ENCODE measurements at regions of chr19 and their contacts with region 1.

Region 1: DNA sequence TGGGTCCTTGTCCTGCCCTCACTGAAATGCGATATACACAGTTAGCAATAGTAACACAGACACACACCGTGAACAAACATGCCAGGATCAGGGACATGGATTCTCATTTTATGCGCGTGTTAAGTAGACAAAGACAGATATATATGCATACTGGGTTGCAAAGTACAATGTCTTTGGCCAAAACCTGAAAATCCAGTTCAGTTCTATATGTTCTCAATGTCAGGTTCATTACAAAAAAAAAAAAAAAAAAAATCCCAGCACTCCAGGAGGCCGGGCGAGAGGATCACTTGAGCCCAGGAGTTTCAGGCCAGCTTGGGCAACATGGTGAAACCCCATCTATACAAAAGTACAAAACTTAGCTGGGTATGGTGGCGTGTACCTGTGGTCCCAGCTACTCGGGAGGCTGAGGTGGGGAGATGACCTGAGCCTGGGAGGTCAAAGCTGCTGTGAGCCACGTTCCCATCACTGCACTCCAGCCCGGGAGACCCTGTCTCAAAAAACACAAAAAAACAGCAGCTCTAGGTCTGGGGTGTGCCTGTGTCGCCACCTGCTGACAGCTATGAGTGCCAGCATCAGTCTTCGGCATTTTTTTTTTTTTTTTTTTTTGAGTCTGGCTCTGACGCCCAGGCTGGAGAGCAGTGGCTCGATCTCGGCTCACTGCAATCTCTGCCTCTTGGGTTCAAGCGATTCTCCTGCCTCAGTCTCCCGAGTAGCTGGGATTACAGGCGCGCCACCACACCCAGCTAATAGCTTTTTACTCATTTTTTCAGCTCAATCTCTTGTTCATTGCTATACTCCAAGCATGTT is 10.3 kb downstream of the AP2S1 start:
- DNase-seq: peak in 2 of 3 donors; percentile 55 to 66
- ATAC-seq: peak; percentile 78
- H3K4me3 ChIP-seq: no peak overlapping the region
- H3K4me1 ChIP-seq: peaks cover 13% of the 10 kb centered on the region
- CTCF ChIP-seq: peak; percentile 69

Region 2: DNA sequence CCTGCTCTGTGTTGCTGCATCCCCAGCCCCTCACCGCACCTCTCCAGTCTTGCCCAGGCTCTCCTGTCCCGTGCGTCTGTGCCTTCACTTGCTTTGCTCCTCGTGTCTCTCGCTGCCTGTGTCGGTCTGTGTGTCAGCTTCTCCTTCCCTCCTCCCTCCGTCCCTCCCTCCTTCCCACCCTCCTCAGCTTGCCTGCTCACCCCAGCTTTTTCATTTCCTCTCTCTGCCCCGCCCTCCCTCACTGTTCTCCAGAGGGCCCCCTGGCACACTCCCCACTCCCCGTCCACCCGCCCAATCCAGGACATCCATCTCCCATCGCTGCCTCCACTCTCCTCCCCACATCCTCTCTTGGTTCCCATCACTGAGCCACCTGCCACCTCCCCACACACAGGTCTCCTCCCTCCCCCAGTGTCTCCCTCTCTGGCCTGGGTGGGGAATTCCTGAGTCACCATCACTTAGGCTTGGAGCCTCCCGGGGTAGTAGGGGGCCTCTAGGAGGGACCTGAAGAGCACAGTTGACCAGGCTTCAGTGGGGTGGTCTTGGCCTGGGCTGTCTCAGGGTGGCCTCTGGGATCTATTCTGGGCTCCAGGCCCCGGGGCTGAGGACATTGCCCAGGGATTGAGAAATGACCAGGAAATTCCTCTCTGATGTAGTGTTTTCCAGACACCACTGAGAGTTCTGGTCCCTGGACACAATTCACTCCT is 215.2 kb before region 1 on chr19 and contains the start of gene PTGIR:
- intact Hi-C with region 1: no loop called
- DNase-seq: peak in 2 of 3 donors; percentile 46 to 68
- ATAC-seq: peak; percentile 47
- H3K4me3 ChIP-seq: no peak within 1 kb of the TSS
- H3K4me1 ChIP-seq: no peaks in the 10 kb centered on the region
- CTCF ChIP-seq: no peak
- total RNA-seq, gene PTGIR: 0.49 to 2.4 (median 2.1) TPM

Region 3: GRCh38 chr19:46756544-46756888 is 83.8 kb before region 1 on chr19:
- intact Hi-C with region 1: loop called (anchors 2 kb)
- DNase-seq: peak in 2 of 3 donors; percentile 41 to 60
- ATAC-seq: no peak
- H3K4me3 ChIP-seq: no peak overlapping the region
- H3K4me1 ChIP-seq: peaks cover 3% of the 10 kb centered on the region
- CTCF ChIP-seq: no peak

Region 4: DNA sequence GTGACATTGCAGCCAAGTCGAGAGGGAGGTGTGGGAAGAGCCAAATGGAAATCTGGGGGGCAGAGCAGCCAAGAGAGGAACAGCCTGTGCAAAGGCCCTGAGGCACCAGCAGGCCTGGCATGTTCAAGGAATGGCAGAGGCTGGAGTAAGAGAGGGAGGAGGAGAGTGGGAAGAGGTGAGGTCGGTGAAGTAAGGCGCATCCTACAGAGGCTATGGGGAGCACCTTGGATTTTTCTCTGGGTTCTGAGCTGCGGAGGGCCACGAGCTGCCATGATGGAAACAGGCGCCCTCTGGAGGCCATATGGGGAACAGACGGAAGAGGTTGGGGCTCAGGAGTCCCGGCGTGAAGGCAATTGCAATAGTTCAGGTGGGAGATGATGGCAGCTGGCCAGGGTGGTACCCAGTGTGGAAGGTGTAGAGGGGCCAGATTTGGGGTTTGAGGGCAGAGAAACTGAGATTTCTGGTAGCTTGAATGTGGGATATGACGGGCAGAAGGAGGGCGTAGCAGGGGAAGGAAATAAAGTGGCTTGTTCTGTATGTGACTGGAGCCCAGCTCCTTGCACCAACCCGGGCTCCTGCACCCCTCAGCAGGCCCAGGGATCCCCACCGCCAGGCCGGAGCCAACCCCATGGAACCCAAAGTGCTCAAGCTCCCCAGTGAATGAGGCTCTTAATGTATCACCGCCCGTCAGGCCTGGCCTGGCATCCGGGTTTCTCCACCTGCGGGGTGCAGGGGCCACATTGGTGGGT is 73.6 kb before region 1 on chr19:
- intact Hi-C with region 1: loop called in 1 of 2 experiments (anchors 5 kb)
- DNase-seq: peak; percentile 58 to 64 (median 62)
- ATAC-seq: no peak
- H3K4me3 ChIP-seq: no peak overlapping the region
- H3K4me1 ChIP-seq: peaks cover 32% of the 10 kb centered on the region
- CTCF ChIP-seq: peak; percentile 58

Region 5: GRCh38 chr19:46776927-46777911 is 63.1 kb before region 1 on chr19:
- intact Hi-C with region 1: no loop called
- DNase-seq: no peak
- ATAC-seq: peak; percentile 53
- H3K4me3 ChIP-seq: no peak overlapping the region
- H3K4me1 ChIP-seq: peaks cover 2% of the 10 kb centered on the region
- CTCF ChIP-seq: no peak

Region 6: DNA sequence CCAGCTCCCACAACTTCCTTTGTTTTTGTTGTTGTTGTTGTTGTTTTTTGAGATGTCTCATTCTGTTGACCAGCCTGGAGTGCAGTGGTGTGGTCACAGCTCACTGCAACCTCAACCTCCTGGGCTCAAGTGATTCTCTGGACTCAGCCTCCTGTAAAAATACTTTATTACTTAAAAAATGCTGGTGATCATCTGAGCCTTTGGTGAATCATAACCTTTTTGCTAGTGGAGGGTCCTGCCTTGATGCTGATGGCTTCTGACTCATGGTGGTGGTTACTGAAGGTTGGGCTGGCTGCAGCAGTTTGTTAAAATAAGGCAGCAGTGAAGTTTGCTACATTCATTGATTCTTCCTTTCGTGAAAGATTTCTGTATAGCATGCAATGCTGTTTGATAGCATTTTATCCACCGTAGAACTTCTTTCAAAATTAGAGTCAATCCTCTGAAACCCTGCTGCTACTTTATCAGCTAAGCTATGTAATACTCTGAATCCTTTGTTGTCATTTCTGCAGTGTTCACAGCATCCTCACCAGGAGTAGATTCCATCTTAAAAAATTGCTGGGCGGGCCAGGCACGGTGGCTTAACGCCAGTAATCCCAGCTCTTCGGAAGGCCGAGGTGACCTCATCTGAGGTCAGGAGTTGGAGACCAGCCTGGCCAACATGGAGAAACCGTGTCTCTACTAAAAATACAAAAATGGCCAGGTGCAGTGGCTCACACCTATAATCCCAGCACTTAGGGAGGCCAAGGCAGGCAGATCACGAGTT is 38.5 kb after region 1 on chr19:
- intact Hi-C with region 1: no loop called
- DNase-seq: no peak
- ATAC-seq: no peak
- H3K4me3 ChIP-seq: no peak overlapping the region
- H3K4me1 ChIP-seq: no peaks in the 10 kb centered on the region
- CTCF ChIP-seq: no peak